MCF 10A (cell line): ENCODE measurements at regions of chr14 and their contacts with region 1.

Region 1: DNA sequence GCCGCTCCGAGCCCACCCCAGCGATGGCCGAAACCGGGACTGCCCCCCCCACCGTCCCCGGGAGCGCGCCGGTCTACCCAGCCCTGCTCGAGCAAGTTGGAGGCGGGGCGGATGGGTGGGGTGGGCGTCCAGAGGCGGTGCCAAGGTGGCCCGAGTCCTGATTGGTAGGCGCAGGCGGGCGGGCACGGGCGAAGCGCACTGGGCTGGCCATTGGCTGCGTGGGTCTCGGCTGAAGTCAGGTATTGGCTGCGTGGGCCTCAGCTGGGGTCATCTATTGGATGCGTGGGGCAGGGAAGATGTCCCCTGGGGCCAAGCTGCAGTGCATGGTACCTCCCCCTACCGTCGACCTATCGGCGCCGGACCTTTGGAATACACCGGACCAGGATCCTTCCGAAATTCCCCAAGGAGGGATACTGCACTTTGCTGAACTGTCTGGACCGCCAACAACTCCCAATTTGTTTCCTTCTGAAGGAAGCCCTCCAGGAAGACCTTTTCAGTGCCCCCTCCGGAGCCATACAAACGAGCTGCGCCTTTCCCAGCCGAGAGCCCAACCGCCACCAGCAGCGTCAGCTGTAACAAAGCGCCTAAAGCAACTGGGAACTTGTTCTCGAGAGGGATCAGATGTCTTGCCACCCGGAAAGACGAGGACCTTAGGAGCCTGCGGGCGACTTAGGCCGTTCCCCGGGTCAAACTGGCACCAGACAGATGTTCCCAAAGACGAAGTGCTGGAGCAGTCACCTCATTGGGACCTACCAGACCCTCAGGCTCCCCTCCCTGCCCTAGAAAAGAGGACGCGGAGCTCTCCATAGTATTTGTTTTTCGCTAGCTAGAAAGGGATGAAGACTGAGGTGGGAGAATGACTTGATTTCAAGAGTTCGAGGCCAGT is at the start of gene HOMEZ:
- DNase-seq: peak; percentile 98
- H3K4me3 Mint-ChIP-seq: peak within 1 kb of the TSS; percentile 97
- H3K27ac Mint-ChIP-seq: peak within 1 kb of the TSS; percentile 75
- H3K4me1 Mint-ChIP-seq: peaks cover 8% of the 10 kb centered on the region
- H3K27me3 Mint-ChIP-seq: no peaks in the 10 kb centered on the region
- CTCF ChIP-seq: no peak
- total RNA-seq, gene HOMEZ: 6.6 and 9.3 TPM in 2 replicates

Region 2: GRCh38 chr14:22748631-22749068 is 537.6 kb before region 1 on chr14:
- CTCF ChIA-PET with region 1: no interaction called
- POLR2A ChIA-PET with region 1: no interaction called
- intact Hi-C with region 1: no loop called
- DNase-seq: no peak
- H3K4me3 Mint-ChIP-seq: no peak overlapping the region
- H3K27ac Mint-ChIP-seq: no peak overlapping the region
- H3K4me1 Mint-ChIP-seq: no peaks in the 10 kb centered on the region
- H3K27me3 Mint-ChIP-seq: no peaks in the 10 kb centered on the region
- CTCF ChIP-seq: no peak

Region 3: DNA sequence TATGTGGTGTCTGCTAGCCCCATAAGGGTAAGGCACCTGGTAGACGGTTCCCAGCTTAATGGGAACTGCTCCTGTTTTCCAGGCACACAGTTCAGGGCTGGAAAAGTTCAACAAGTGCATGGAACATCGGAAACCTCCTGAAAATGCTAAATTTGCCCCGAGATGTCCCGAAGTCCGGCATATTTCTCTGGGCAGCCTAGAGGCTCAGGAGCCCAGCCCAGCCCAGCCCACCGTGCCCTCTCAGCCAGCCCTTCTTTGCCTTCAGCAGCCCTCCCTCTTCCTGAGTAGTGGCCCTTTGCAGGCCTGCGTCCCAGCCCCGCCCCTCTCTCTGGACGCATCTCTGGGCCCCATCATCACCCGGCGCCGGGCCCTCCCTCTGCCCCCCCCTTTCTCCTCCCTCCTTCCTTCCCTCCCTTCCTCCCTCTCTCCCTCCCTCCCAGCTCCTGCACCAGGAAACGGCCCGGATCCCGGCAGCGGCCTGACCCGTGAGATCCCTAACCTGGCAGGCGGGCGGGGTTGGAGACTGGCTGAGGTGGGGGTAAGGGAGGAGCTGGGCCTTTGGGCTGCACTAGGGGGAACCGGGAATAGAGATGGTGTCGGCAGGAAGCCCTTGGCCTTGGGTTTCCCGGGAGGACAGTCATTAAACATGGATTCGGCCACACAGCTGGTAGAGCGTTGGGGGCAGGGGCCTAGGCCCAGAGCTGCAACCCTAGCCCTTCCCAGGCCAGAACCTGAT is 20.3 kb after region 1 on chr14 and contains the start of gene BCL2L2:
- CTCF ChIA-PET with region 1: interaction called, 24 read pairs
- POLR2A ChIA-PET with region 1: interaction called, 60 read pairs
- intact Hi-C with region 1: no loop called
- DNase-seq: peak; percentile 92
- H3K4me3 Mint-ChIP-seq: peak within 1 kb of the TSS; percentile 98
- H3K27ac Mint-ChIP-seq: peak within 1 kb of the TSS; percentile 88
- H3K4me1 Mint-ChIP-seq: peaks cover 26% of the 10 kb centered on the region
- H3K27me3 Mint-ChIP-seq: no peaks in the 10 kb centered on the region
- CTCF ChIP-seq: no peak
- total RNA-seq, gene BCL2L2: 41.2 and 42.5 TPM in 2 replicates